ENCODE measurements at regions of chr12 and their contacts with region 1.

Region 1: GRCh38 chr12:91180582-91181395 is 1.8 kb downstream of the DCN start:
- DNase-seq: peak; percentile 81
- H3K4me3 ChIP-seq: peak overlapping the region; percentile 34
- CTCF ChIP-seq: no peak

Region 2: GRCh38 chr12:91140026-91140931 is 40.5 kb before region 1 on chr12:
- in situ Hi-C with region 1: loop called (anchors 5 kb)
- DNase-seq: peak; percentile 76
- H3K4me3 ChIP-seq: no peak overlapping the region
- CTCF ChIP-seq: no peak

Region 3: GRCh38 chr12:91239481-91239880 is 58.7 kb after region 1 on chr12:
- in situ Hi-C with region 1: no loop called
- DNase-seq: no peak
- H3K4me3 ChIP-seq: no peak overlapping the region
- CTCF ChIP-seq: no peak